ENCODE measurements at regions of chr15 and their contacts with region 1.

Region 1: GRCh38 chr15:49135893-49136292 is 19.5 kb downstream of the COPS2 start:
- DNase-seq: no peak
- H3K4me3 ChIP-seq: no peak overlapping the region
- H3K27ac ChIP-seq: no peak overlapping the region
- H3K4me1 ChIP-seq: peaks cover 11% of the 10 kb centered on the region
- H3K27me3 ChIP-seq: no peaks in the 10 kb centered on the region
- CTCF ChIP-seq: no peak

Region 2: DNA sequence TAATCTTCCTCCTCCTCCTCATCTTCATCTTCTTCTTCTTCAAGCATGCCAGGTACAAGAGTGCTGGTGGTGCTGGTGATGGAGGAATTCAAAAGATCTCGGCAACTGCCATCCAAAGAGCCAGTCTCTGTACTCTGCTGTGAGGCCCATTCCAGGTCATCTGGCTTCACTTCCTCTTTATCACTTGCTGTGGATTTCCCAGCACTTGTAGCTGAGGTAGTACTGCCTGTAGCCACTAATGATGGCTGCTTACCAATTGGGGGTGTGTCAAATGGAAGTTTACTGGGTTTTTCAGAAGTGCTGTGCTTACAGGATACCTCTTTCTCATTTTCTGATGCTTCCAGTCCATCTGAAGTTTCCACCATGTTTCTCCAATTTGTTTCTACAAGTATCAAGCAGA is 143.3 kb before region 1 on chr15:
- intact Hi-C with region 1: no loop called
- DNase-seq: no peak
- H3K4me3 ChIP-seq: no peak overlapping the region
- H3K27ac ChIP-seq: no peak overlapping the region
- H3K4me1 ChIP-seq: no peaks in the 10 kb centered on the region
- H3K27me3 ChIP-seq: no peaks in the 10 kb centered on the region
- CTCF ChIP-seq: peak; percentile 27

Region 3: DNA sequence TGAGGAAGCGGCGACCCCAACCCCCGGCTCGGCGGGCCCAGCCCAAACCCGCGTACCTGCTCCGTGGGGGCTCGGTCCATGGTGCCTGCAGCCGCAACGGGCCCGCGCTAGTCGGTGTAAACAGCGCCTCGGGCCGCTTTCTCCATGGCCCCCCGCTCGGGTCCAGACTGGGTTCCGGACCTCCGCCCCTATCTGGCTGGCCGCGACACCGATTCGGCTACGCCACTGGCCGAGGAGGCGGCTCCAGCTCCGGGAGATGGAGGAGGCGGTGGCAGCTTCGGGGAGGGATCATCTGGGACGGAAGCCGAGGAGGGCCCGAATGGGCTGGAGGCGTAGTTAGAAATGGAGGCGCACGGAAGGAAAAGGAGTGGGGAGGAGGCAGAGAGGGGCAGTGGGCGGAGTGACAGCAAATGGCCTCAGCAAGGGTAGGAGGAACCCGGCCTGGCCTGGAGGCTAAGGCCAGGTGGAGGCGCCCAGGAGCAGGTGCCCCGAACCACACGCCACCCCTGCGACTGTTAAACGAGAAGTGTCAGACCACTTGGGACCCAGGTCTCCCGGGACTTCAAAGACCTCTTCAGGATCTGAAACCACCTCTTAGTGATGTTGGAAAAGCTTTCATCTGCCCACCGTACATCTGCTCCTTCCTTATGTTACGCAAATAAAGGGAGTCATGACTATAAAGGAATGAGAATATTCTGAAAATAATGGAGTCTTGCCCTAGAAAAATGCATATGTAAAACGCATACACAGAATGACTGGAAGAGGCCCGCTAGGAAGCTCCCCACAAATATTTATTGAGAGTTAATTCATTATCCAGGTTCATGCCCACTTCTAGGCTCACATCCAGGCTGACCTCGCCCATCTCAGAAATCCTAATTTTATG is 89.4 kb before region 1 on chr15 and contains the start of gene SECISBP2L:
- intact Hi-C with region 1: loop called (anchors 10 kb)
- DNase-seq: peak; percentile 94
- H3K4me3 ChIP-seq: peak within 1 kb of the TSS; percentile 92
- H3K27ac ChIP-seq: peak within 1 kb of the TSS; percentile 93
- H3K4me1 ChIP-seq: peaks cover 52% of the 10 kb centered on the region
- H3K27me3 ChIP-seq: no peaks in the 10 kb centered on the region
- CTCF ChIP-seq: peak; percentile 39
- total RNA-seq, gene SECISBP2L: 39.3 TPM

Region 4: GRCh38 chr15:49082960-49083359 is 52.9 kb before region 1 on chr15:
- intact Hi-C with region 1: no loop called
- DNase-seq: no peak
- H3K4me3 ChIP-seq: no peak overlapping the region
- H3K27ac ChIP-seq: no peak overlapping the region
- H3K4me1 ChIP-seq: peaks cover 11% of the 10 kb centered on the region
- H3K27me3 ChIP-seq: no peaks in the 10 kb centered on the region
- CTCF ChIP-seq: no peak

Region 5: GRCh38 chr15:49169880-49170597 is 34.1 kb after region 1 on chr15 and contains the start of gene GALK2:
- intact Hi-C with region 1: no loop called
- DNase-seq: peak; percentile 80
- H3K4me3 ChIP-seq: peak within 1 kb of the TSS; percentile 73
- H3K27ac ChIP-seq: peak within 1 kb of the TSS; percentile 79
- H3K4me1 ChIP-seq: peaks cover 21% of the 10 kb centered on the region
- H3K27me3 ChIP-seq: no peaks in the 10 kb centered on the region
- CTCF ChIP-seq: no peak
- total RNA-seq, gene GALK2: 39.3 TPM

Measured in left ventricle myocardium inferior (tissue), 1 donor.